PC-9 (cell line): ENCODE measurements at regions of chr3 and their contacts with region 1.

Region 1: DNA sequence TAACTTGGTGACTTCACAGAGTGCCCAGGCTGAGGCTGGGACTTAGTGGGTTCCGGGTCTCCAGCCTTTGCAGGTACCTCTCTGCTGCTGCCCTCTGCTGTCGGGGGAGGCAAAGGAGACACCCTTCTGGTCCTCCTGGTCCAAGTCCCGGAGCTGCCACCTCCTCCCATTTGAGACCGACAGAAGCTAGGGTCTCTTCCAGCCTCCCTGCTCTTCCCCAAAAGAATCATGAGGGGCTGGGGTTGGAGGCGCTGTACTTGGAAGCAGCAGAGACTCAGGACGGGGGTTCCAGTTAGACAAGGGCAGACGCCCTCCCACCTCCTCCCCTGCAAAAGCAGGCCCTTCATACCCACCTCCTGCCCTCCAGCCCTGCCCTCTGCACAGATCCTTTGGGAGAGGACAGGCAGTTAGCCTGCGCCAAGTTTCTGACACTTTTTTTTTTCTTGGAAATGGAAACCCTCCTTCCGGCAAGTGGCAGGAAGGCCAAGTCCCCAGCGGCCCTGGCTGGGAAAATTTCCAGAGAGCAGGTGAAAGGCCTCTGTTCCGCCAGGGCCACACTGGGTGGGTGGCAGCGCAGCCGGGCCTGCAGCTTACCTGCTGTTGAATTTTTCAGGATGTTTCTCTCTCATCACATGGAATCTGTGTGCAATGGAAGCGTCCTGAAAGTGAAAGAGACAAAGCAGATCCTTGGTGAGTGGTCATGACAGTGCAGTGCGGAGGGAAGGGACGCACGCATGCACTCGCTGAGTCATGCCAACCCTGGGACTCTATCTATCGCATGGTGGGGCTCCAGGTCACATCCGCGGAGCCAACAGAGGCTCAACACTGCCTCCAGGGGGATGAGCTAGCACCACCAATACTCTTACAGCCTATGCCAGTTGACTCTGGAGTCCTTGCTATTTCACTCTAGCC is 119.9 kb downstream of the DGKG start:
- DNase-seq: peak; percentile 86 to 89
- H3K4me3 ChIP-seq: peak overlapping the region; percentile 61
- H3K27ac ChIP-seq: peak overlapping the region; percentile 70
- H3K4me1 ChIP-seq: peaks cover 18% of the 10 kb centered on the region
- H3K27me3 ChIP-seq: no peaks in the 10 kb centered on the region
- CTCF ChIP-seq: peak; percentile 81

Region 2: GRCh38 chr3:186002884-186003472 is 239.2 kb before region 1 on chr3:
- CTCF ChIA-PET with region 1: no interaction called
- POLR2A ChIA-PET with region 1: no interaction called
- intact Hi-C with region 1: loop called (anchors 5 kb)
- DNase-seq: peak in 1 of 2 experiments; percentile 56
- H3K4me3 ChIP-seq: no peak overlapping the region
- H3K27ac ChIP-seq: no peak overlapping the region
- H3K4me1 ChIP-seq: no peaks in the 10 kb centered on the region
- H3K27me3 ChIP-seq: no peaks in the 10 kb centered on the region
- CTCF ChIP-seq: peak; percentile 57

Region 3: DNA sequence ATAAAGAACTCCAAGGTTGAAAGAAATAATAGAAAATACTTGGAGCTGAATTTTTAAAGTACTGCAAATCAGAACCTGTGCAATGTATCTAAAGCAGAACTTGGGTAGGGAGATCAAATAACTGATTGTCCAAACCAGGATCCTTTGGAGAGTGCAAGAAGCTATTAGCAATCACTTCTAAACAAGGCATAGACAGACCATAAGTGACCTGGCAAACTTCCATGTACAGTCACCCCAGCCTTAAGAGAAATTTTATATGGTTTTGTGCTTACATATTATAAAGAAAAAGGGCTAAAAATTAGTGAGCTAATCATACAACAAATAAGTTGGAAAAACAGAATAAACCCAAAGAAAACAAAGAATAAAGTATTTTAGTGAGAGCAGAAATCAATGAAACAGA is 168.5 kb before region 1 on chr3:
- CTCF ChIA-PET with region 1: no interaction called
- POLR2A ChIA-PET with region 1: no interaction called
- intact Hi-C with region 1: loop called (anchors 1 kb)
- DNase-seq: no peak
- H3K4me3 ChIP-seq: no peak overlapping the region
- H3K27ac ChIP-seq: no peak overlapping the region
- H3K4me1 ChIP-seq: no peaks in the 10 kb centered on the region
- H3K27me3 ChIP-seq: no peaks in the 10 kb centered on the region
- CTCF ChIP-seq: no peak

Region 4: DNA sequence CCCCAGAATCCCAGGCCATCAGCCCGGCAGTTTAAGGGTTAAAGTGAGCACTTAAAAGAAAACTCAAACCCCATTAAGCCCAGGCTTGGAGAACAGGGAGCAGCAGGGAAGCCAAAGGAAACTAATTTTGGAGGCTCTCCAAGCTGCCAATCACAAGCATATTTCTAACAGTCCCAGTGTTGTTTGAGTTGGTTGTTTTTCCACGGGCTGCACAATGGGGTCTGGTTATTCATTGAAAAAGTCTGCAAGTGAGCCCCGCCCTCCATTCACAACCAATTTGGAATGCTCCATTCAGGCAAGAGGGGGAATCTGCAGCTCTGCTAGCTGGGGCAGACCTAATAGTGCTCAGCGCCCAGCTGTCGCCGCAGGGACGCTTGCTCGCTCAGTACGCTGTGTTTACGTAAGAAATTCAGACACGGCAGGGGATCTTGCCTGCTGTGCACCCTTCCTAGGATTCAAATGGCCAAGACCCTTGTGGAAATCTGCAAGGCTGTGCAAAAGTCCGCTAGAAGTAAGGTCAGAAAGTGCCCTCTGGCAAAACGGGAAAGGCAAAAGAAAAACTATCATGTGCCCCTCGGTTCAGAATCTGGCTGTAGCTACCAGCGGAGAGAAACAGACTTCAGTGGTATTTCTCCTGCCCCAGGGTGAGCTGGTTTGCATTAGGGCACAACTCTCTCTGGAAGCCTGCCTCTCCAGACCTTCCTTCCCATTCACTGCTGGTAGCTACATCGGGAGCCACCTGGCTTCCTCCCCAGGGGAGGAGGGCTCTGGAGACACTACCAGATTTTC is 144.3 kb before region 1 on chr3:
- CTCF ChIA-PET with region 1: no interaction called
- POLR2A ChIA-PET with region 1: interaction called, 6 read pairs
- intact Hi-C with region 1: loop called (anchors 2 kb)
- DNase-seq: peak; percentile 93 to 95
- H3K4me3 ChIP-seq: peak overlapping the region; percentile 52
- H3K27ac ChIP-seq: peak overlapping the region; percentile 53
- H3K4me1 ChIP-seq: peaks cover 24% of the 10 kb centered on the region
- H3K27me3 ChIP-seq: no peaks in the 10 kb centered on the region
- CTCF ChIP-seq: no peak

Region 5: GRCh38 chr3:186121968-186122367 is 120.2 kb before region 1 on chr3:
- CTCF ChIA-PET with region 1: no interaction called
- POLR2A ChIA-PET with region 1: no interaction called
- intact Hi-C with region 1: no loop called
- DNase-seq: peak in 1 of 2 experiments; percentile 30
- H3K4me3 ChIP-seq: no peak overlapping the region
- H3K27ac ChIP-seq: no peak overlapping the region
- H3K4me1 ChIP-seq: 0 out of 2 replicates have a peak, but pooled peaks cover 5% of the 10 kb centered on the region
- H3K27me3 ChIP-seq: no peaks in the 10 kb centered on the region
- CTCF ChIP-seq: no peak